Activated CD8-positive, alpha-beta T cell treated with anti-CD3 and anti-CD28 coated beads for 36 hours (primary cell): ENCODE measurements at regions of chr15 and their contacts with region 1.

Region 1: GRCh38 chr15:73873889-73874511 is 636 bp downstream of the TBC1D21 start:
- DNase-seq: peak; percentile 55
- ATAC-seq: no peak
- H3K4me3 Mint-ChIP-seq: no peak overlapping the region
- H3K27ac Mint-ChIP-seq: no peak overlapping the region
- H3K4me1 Mint-ChIP-seq: no peaks in the 10 kb centered on the region
- H3K27me3 Mint-ChIP-seq: peaks cover 10% of the 10 kb centered on the region
- CTCF ChIP-seq: peak; percentile 78

Region 2: DNA sequence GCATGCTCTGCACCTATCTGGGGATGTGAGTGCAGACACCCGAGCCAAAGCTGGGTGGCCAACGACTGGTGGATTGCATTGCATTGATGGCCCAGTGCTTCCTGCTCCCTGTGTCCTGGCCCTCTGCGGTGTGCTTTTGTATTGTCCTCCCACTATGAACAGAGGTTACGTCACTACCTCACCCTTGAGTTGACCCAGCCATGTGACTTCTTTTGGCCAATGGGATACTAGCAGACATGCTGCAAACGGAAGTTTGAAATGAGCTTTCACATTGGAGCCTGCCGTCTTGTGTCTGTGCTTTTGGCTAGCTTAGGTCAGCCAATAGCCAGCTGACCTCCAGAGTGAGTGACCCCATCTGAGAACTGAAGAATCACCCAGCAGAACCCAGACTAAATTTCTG is 15.9 kb before region 1 on chr15:
- CTCF ChIA-PET with region 1: interaction called, 25 read pairs
- POLR2A ChIA-PET with region 1: no interaction called
- intact Hi-C with region 1: no loop called
- DNase-seq: no peak
- ATAC-seq: no peak
- H3K4me3 Mint-ChIP-seq: no peak overlapping the region
- H3K27ac Mint-ChIP-seq: no peak overlapping the region
- H3K4me1 Mint-ChIP-seq: no peaks in the 10 kb centered on the region
- H3K27me3 Mint-ChIP-seq: peaks cover 12% of the 10 kb centered on the region
- CTCF ChIP-seq: no peak

Region 3: DNA sequence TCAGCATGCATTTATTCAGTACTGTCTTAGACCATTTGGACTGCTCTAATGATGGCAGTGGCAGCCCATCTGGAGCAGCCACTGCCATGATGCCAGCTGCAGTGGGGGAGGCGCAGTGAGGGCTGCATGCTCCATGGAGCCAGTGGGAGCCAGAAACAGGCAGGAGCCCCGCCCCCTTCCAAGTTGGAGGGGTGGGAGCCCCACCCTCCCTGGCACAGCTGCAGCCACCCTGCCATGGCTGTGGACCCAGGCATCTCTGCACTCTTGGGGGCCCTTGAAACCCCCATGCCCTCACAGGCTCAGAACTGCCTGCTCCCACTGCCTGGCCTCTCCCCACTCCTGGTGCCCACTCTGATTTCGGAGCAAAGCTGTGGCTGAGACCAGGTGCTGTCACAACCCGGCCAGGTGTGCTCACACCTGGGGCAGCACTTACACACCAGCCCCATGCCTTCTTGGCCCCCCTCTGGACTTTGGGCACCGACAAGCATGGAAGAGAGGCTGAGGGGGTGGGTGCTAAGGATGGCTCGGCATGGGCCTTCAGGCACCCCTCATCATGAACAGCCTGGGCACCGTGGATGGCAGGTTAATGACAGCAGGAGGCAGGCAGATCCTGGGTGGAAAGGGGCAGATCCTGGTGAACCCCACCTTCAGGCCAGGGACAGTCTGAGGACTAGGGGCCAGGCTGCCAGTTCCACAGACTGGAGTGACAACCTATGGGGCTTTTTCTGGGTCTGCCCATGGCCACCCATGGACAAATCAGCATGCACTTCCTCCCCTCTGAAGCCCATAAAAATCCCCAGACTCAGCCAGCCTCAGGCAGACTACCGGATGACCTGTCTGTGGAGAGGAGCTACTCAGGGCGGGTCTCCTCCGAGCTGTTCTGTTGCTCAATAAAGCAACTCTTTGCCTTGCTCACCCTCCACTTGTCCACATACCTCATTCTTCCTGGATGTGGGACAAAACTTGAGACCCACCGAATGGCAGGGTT is 17.6 kb after region 1 on chr15:
- CTCF ChIA-PET with region 1: interaction called, 22 read pairs
- POLR2A ChIA-PET with region 1: no interaction called
- intact Hi-C with region 1: no loop called
- DNase-seq: no peak
- ATAC-seq: no peak
- H3K4me3 Mint-ChIP-seq: no peak overlapping the region
- H3K27ac Mint-ChIP-seq: no peak overlapping the region
- H3K4me1 Mint-ChIP-seq: no peaks in the 10 kb centered on the region
- H3K27me3 Mint-ChIP-seq: peaks cover 2% of the 10 kb centered on the region
- CTCF ChIP-seq: no peak

Region 4: GRCh38 chr15:73908030-73908821 is 34.2 kb after region 1 on chr15:
- CTCF ChIA-PET with region 1: interaction called, 137 read pairs
- POLR2A ChIA-PET with region 1: no interaction called
- intact Hi-C with region 1: loop called (anchors 5 kb)
- DNase-seq: peak; percentile 91
- ATAC-seq: peak; percentile 99
- H3K4me3 Mint-ChIP-seq: no peak overlapping the region
- H3K27ac Mint-ChIP-seq: no peak overlapping the region
- H3K4me1 Mint-ChIP-seq: no peaks in the 10 kb centered on the region
- H3K27me3 Mint-ChIP-seq: no peaks in the 10 kb centered on the region
- CTCF ChIP-seq: peak; percentile 85

Region 5: GRCh38 chr15:73964736-73965093 is 90.7 kb after region 1 on chr15:
- CTCF ChIA-PET with region 1: interaction called, 10 read pairs
- POLR2A ChIA-PET with region 1: no interaction called
- intact Hi-C with region 1: no loop called
- DNase-seq: peak; percentile 96
- ATAC-seq: peak; percentile 89
- H3K4me3 Mint-ChIP-seq: peak overlapping the region; percentile 71
- H3K27ac Mint-ChIP-seq: peak overlapping the region; percentile 91
- H3K4me1 Mint-ChIP-seq: peaks cover 30% of the 10 kb centered on the region
- H3K27me3 Mint-ChIP-seq: no peaks in the 10 kb centered on the region
- CTCF ChIP-seq: peak; percentile 95